K562 (cell line): ENCODE measurements at regions of chr11 and their contacts with region 1.

Region 1: GRCh38 chr11:69642913-69643632 is 2.1 kb downstream of the CCND1 start:
- DNase-seq: peak; percentile 81 to 88 (median 84)
- ATAC-seq: peak; percentile 88
- H3K4me3 ChIP-seq: peak overlapping the region; percentile 54
- H3K27ac ChIP-seq: peak overlapping the region; percentile 66; the same call in 1 of the 3 replicates
- H3K4me1 ChIP-seq: peaks cover 8 to 80% of the 10 kb centered on the region in 2 experiments; a peak in 4 of 5 replicates
- H3K27me3 ChIP-seq: peaks cover 9 to 13% of the 10 kb centered on the region in 2 experiments
- CTCF ChIP-seq: peak; percentile 90 to 94 (median 92)
- EP300 ChIP-seq: no peak
- POLR2A ChIP-seq: no peak
- RAD21 ChIP-seq: peak; percentile 98

Region 2: GRCh38 chr11:69101115-69101791 is 541.8 kb before region 1 on chr11:
- CTCF ChIA-PET with region 1: interaction called, 43 read pairs
- POLR2A ChIA-PET with region 1: interaction called, 6 read pairs
- in situ Hi-C with region 1: loop called (anchors 5 kb)
- intact Hi-C with region 1: loop called (anchors 2 kb)
- DNase-seq: peak; percentile 51 to 82 (median 76)
- ATAC-seq: peak; percentile 88
- H3K4me3 ChIP-seq: no peak overlapping the region
- H3K27ac ChIP-seq: no peak overlapping the region
- H3K4me1 ChIP-seq: peaks cover 0 to 13% of the 10 kb centered on the region in 2 experiments; a peak in 2 of 5 replicates
- H3K27me3 ChIP-seq: peaks cover 12 to 85% of the 10 kb centered on the region in 2 experiments; a peak in 4 of 5 replicates
- CTCF ChIP-seq: peak; percentile 87 to 95 (median 88)
- EP300 ChIP-seq: no peak
- POLR2A ChIP-seq: no peak
- RAD21 ChIP-seq: peak; percentile 90 to 96

Region 3: DNA sequence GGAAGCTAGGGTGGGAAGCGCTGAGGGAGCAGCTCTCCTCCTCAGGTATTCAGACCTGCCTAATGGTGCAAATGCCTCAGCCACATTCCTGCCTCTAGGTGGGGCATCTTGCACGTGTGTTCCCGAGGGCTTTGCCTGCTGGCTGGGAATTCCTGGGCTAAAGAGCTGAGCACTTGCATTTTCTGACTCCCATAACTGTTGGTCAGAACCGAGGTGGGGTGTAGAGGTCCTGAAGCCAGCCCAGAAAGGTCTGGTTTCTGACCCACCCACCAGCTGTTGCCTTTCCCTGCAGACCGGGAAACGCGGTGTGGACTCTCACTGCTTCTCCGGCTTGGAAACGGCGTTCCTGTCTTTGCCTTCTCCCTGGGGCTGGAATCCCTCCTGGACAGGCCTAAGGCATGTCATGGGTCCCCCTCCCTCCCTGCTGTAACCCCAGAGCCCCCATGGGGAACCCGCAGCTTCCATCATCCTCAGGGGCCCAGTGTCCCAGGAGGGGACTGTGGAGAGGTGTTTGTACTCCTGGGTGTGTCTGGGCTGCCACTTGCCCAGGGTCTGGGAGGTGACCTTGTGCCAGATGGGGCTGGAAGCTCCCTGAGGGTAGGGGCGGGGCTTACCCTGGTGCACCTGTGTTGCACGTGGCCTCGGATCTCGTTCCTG is 511.3 kb before region 1 on chr11:
- CTCF ChIA-PET with region 1: interaction called, 3 read pairs
- POLR2A ChIA-PET with region 1: no interaction called
- in situ Hi-C with region 1: no loop called
- intact Hi-C with region 1: loop called (anchors 10 kb)
- DNase-seq: peak; percentile 59 to 72 (median 62)
- ATAC-seq: peak; percentile 91
- H3K4me3 ChIP-seq: no peak overlapping the region
- H3K27ac ChIP-seq: no peak overlapping the region
- H3K4me1 ChIP-seq: peaks cover 3 to 6% of the 10 kb centered on the region in 2 experiments; a peak in 2 of 5 replicates
- H3K27me3 ChIP-seq: peaks cover 0 to 8% of the 10 kb centered on the region in 2 experiments; a peak in 3 of 5 replicates
- CTCF ChIP-seq: peak; percentile 77 to 89 (median 86)
- EP300 ChIP-seq: no peak
- POLR2A ChIP-seq: no peak
- RAD21 ChIP-seq: peak; percentile 66 to 84

Region 4: DNA sequence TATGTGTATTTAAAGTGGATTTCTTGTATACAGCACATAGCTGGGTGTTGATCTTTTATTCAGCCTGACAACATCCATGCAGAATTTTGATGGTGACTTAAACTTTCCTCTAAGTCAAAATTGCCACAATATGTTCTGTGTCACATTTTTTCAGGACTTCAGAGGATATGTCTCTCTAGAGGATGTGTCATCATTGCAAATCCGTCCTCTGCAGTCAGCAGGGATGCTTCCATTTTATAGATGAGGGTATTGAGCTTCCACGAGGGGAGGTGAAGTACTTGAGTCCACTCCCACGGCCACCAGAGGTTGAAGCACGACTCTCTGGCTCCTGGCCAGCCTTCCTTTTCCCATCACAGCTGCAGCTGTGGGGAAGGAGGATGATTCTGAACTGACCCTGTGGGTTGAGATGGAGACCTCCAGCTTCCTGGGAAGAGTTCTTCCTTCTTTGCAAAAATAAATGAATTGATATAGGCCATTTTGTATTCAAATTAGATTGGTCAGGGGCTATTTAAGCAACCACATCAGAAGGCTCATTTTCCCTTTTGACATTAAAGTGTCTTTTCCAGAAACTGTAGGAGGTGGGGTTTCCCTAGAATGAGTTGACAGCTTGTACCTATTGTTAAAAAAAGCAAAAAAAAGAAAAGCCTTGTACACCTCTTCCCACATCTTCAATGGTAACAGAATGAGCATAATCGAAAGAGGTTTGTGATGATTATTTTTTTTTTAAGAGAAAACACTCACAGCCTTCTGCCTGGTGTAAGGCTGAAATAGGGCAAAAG is 404.3 kb before region 1 on chr11:
- CTCF ChIA-PET with region 1: no interaction called
- POLR2A ChIA-PET with region 1: no interaction called
- in situ Hi-C with region 1: no loop called
- intact Hi-C with region 1: loop called (anchors 10 kb)
- DNase-seq: no peak
- ATAC-seq: no peak
- H3K4me3 ChIP-seq: no peak overlapping the region
- H3K27ac ChIP-seq: no peak overlapping the region
- H3K4me1 ChIP-seq: no peaks in the 10 kb centered on the region
- H3K27me3 ChIP-seq: peaks cover 6 to 7% of the 10 kb centered on the region in 2 experiments; a peak in 3 of 5 replicates
- CTCF ChIP-seq: no peak
- EP300 ChIP-seq: no peak
- POLR2A ChIP-seq: no peak
- RAD21 ChIP-seq: no peak